ENCODE measurements at regions of chr13 and their contacts with region 1.

Region 1: DNA sequence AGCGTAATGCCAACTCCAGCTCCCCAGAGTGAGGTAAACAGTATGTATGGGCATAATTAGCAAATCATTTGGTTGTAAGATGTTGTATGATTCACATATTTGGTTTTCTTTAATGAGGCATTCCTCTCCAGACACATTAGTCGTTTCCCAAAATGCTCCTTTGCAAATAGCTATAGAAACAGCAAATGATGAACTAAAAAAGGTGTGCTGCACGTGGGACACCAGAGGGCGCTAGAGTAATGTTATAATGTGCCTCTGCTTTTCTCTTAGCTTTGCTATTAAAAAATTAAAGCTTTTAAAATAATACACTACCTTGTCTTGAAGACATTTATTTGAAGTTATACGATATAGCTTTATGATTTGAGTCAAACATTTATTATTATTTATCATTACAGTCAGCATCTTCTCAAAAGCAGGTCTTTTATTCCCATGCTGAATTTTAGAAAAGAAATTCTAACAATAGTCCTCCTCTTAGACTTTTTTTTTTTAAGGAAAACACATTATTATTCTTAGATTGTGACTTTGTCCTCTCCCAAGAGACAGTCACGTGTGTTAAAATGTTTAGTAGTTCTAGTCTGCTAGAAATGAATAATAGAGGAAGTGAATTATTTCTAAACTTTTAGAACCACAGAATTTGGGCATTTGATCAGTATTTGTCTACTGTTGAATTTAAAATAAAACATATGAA is 121.6 kb upstream of the FRY start:
- DNase-seq: no peak

Region 2: GRCh38 chr13:31998131-31998530 is 88.1 kb after region 1 on chr13:
- intact Hi-C with region 1: loop called (anchors 5 kb)
- DNase-seq: no peak

Region 3: GRCh38 chr13:32164622-32165268 is 254.7 kb after region 1 on chr13:
- intact Hi-C with region 1: loop called (anchors 5 kb)
- DNase-seq: no peak

Region 4: DNA sequence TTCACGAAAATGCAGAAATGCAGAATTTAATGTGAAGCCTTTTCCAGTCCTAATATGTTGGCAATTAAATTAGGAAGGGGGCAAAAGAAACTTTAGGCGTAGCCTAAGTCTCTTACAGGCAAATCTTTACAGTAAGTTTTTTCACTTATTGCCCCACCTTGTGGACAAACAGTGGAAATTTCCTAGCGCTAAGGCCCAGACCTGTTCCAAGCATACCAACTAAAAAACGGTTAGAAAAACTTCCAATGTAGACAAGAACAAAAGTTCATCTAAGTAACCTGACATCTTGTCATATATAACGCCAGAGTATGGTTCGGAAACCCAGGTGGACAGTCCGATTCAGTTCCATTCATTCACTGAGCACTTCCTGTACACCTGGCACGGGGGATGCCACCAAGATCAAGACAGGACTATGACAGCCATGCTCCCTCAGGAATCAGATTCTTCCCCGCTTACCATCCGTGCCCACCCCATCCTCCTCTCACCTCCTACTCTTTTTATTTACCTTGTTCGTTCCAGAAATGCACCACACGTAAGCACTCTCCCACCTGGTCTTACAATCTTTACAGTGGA is 400.2 kb after region 1 on chr13:
- intact Hi-C with region 1: loop called (anchors 5 kb)
- DNase-seq: no peak